Transverse colon (tissue), 4 donors: ENCODE measurements at regions of chr11 and their contacts with region 1.

Region 1: GRCh38 chr11:13955971-13956421 is 6.5 kb upstream of the SPON1 start:
- DNase-seq: peak; percentile 64
- H3K4me3 ChIP-seq: no peak overlapping the region
- H3K27ac ChIP-seq: no peak overlapping the region
- H3K4me1 ChIP-seq: peaks cover 0 to 4% (median 2%) of the 10 kb centered on the region in 4 donors
- H3K27me3 ChIP-seq: peaks cover under 1% of the 10 kb centered on the region
- CTCF ChIP-seq: peak; percentile 89 to 94 (median 90)
- EP300 ChIP-seq: no peak
- POLR2A ChIP-seq: no peak

Region 2: DNA sequence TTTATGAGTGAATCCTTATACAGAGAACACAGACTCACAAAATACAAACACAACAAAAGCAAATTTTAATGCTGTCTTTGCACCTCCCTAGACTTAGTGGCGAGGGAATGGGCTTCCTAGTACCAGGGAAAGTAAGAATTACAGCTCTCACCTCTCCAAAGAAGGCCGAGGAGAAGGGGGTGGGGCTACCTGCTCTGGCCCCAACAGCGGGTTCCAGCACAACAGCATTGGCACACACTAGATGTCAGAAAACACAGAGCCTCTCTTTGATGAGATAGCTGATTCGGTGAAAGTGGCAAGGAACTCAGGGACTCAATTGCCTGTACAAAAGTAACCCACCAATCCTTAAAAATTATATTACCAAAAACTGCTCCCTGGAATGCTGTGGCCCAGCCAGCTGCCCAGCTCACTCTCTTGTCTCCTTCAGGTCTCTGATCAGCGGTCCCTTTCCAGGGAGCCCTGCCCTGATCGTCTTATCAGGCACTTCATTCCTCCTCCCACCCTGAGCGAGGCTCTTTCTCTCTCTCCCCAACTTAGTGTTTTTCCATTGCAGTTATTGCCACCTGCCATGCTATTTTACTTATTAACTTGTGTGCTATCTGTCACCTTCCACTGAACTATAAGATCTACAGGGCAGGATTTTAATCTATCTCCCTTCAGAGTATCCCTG is 37.2 kb after region 1 on chr11:
- in situ Hi-C with region 1: no loop called
- intact Hi-C with region 1: no loop called
- DNase-seq: peak; percentile 14
- H3K4me3 ChIP-seq: peak overlapping the region in 1 of 4 donors; percentile 38
- H3K27ac ChIP-seq: peak overlapping the region in 3 of 4 donors; percentile 71 to 76 (median 73)
- H3K4me1 ChIP-seq: peaks cover 14 to 41% (median 33%) of the 10 kb centered on the region in 4 donors
- H3K27me3 ChIP-seq: no peaks in the 10 kb centered on the region
- CTCF ChIP-seq: no peak
- EP300 ChIP-seq: no peak
- POLR2A ChIP-seq: no peak

Region 3: GRCh38 chr11:14148653-14149273 is 192.8 kb after region 1 on chr11:
- in situ Hi-C with region 1: loop called in 2 of 4 experiments (anchors 5 kb)
- intact Hi-C with region 1: loop called (anchors 5 kb)
- DNase-seq: no peak
- H3K4me3 ChIP-seq: no peak overlapping the region
- H3K27ac ChIP-seq: no peak overlapping the region
- H3K4me1 ChIP-seq: no peaks in the 10 kb centered on the region
- H3K27me3 ChIP-seq: no peaks in the 10 kb centered on the region
- CTCF ChIP-seq: peak; percentile 59 to 76 (median 60)
- EP300 ChIP-seq: no peak
- POLR2A ChIP-seq: no peak

Region 4: GRCh38 chr11:14249121-14249963 is 293.3 kb after region 1 on chr11:
- in situ Hi-C with region 1: loop called (anchors 5 to 10 kb)
- intact Hi-C with region 1: loop called (anchors 1 kb)
- DNase-seq: peak; percentile 71
- H3K4me3 ChIP-seq: no peak overlapping the region
- H3K27ac ChIP-seq: no peak overlapping the region
- H3K4me1 ChIP-seq: no peaks in the 10 kb centered on the region
- H3K27me3 ChIP-seq: no peaks in the 10 kb centered on the region
- CTCF ChIP-seq: peak; percentile 85 to 90 (median 89)
- EP300 ChIP-seq: no peak
- POLR2A ChIP-seq: no peak